Right cardiac atrium (tissue), 5 donors: ENCODE measurements at regions of chr12 and their contacts with region 1.

Region 1: GRCh38 chr12:107093417-107094182 is at the start of gene CRY1:
- DNase-seq: peak; percentile 98 to 99 (median 99)
- ATAC-seq: peak; percentile 96 to 98
- H3K4me3 ChIP-seq: peak within 1 kb of the TSS; percentile 88
- H3K27ac ChIP-seq: peak within 1 kb of the TSS; percentile 98
- H3K4me1 ChIP-seq: no peaks in the 10 kb centered on the region
- H3K27me3 ChIP-seq: no peaks in the 10 kb centered on the region
- total RNA-seq, gene CRY1: 12.2 to 26.8 (median 16.3) TPM

Region 2: GRCh38 chr12:106955377-106956047 is 138.1 kb before region 1 on chr12 and contains the start of gene TMEM263:
- intact Hi-C with region 1: loop called in 2 of 4 experiments (anchors 10 kb)
- DNase-seq: peak; percentile 97 to 99 (median 98)
- ATAC-seq: peak; percentile 95 to 96
- H3K4me3 ChIP-seq: peak within 1 kb of the TSS; percentile 80
- H3K27ac ChIP-seq: peak within 1 kb of the TSS; percentile 95
- H3K4me1 ChIP-seq: no peaks in the 10 kb centered on the region
- H3K27me3 ChIP-seq: no peaks in the 10 kb centered on the region
- total RNA-seq, gene TMEM263: 55.4 to 69.9 (median 63.6) TPM

Region 3: DNA sequence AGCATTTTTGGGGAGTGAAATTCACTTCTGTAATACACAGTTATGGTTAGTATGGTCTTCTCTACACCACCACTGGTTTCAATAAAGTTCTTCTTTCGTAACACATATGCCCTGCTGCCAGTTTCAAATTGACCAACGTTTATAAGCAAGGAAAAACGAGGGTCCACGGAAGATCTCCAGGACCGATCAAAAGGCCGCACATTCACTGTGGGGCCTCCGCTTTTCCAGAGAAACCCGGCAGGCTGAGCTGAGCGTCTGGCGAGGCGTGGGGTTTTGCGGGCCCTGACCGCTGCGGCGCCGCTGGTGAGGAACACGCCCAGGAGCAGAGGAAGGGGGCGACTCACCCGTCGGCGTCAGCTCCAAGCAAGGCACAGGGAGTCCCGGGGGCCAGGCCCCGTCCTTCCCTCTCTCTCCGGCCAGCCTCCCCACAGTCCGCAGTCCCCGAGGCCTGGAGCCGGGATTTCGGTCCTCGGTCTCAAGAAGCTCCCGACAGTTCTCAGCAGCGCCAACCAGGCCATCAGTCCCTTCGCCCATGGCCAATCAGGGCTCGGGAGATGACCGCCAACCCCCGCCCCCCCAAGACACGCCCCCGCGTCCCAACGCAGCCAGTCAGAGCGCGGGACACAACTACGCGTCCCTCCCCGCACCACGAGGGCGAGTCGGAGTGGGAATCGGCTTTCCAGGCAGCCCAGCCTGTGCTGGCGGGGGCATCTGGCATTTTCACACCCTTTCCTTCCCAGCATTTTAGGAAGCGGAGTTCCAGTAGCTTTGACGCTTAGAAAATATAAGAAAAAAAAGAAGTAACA is 106.8 kb before region 1 on chr12 and contains the start of gene MTERF2:
- intact Hi-C with region 1: loop called in 1 of 4 experiments (anchors 10 kb)
- DNase-seq: peak; percentile 95 to 97 (median 97)
- ATAC-seq: peak; percentile 99 to 100
- H3K4me3 ChIP-seq: peak within 1 kb of the TSS; percentile 89
- H3K27ac ChIP-seq: peak within 1 kb of the TSS; percentile 99
- H3K4me1 ChIP-seq: peaks cover 11% of the 10 kb centered on the region
- H3K27me3 ChIP-seq: no peaks in the 10 kb centered on the region
- total RNA-seq, gene MTERF2: 29.5 to 45.1 (median 38.8) TPM

Region 4: GRCh38 chr12:107007411-107007810 is 86.2 kb before region 1 on chr12:
- intact Hi-C with region 1: no loop called
- DNase-seq: no peak
- ATAC-seq: no peak
- H3K4me3 ChIP-seq: no peak overlapping the region
- H3K27ac ChIP-seq: no peak overlapping the region
- H3K4me1 ChIP-seq: no peaks in the 10 kb centered on the region
- H3K27me3 ChIP-seq: no peaks in the 10 kb centered on the region